Transverse colon (tissue), 4 donors: ENCODE measurements at regions of chr12 and their contacts with region 1.

Region 1: DNA sequence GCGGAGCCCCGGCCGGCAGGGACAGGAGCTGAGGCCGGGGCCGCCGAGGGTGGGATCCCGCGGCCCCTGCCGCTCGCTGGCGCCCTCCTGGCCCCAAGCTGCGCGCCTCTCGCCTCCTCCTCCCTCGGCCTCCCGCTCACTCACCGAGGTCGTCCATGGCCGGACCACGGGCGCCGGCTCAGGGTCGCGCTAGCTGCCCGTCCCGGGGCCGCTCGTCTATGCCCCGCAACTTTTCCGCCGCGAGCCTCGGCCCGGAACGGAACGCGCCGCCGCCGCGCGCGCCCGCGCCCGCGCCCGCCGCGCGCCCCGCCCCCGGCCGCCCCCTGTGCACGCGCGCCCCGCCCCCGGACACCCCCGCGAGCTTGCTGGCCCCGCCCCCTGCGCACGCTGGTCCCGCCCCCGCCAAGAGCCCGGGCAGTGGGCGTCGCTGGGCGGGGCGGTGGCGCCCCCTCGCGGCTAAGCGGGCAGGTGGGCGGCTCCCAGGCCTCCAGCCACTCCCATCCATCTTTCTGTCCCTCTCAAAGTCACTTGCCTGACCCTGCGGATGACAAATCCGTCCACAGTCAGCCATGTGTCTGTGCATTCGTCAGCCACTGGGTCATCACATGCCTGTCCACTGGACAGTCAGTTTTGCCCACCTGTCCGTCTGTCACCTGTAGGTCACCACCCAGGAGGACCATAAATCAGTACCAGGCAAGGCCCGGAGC is at the start of gene PXN:
- DNase-seq: peak; percentile 93
- H3K4me3 ChIP-seq: peak within 1 kb of the TSS; percentile 95 to 99 (median 96)
- H3K27ac ChIP-seq: peak within 1 kb of the TSS; percentile 94 to 98 (median 94)
- H3K4me1 ChIP-seq: peaks cover 18 to 63% (median 42%) of the 10 kb centered on the region in 4 donors
- H3K27me3 ChIP-seq: no peaks in the 10 kb centered on the region
- CTCF ChIP-seq: peak; percentile 63 to 88 (median 77)
- EP300 ChIP-seq: no peak
- POLR2A ChIP-seq: peak; percentile 52
- total RNA-seq, gene PXN: 101 to 328 (median 198) TPM

Region 2: GRCh38 chr12:120228291-120229070 is 37.1 kb before region 1 on chr12:
- in situ Hi-C with region 1: loop called in 2 of 4 experiments (anchors 5 kb)
- intact Hi-C with region 1: loop called (anchors 2 kb)
- DNase-seq: peak; percentile 94
- H3K4me3 ChIP-seq: no peak overlapping the region
- H3K27ac ChIP-seq: peak overlapping the region; percentile 88 to 92 (median 90)
- H3K4me1 ChIP-seq: peaks cover 63 to 98% (median 91%) of the 10 kb centered on the region in 4 donors
- H3K27me3 ChIP-seq: no peaks in the 10 kb centered on the region
- CTCF ChIP-seq: peak; percentile 92 to 98 (median 95)
- EP300 ChIP-seq: no peak
- POLR2A ChIP-seq: no peak

Region 3: GRCh38 chr12:120234643-120235368 is 30.8 kb before region 1 on chr12:
- in situ Hi-C with region 1: loop called in 1 of 4 experiments (anchors 5 kb)
- intact Hi-C with region 1: no loop called
- DNase-seq: peak; percentile 77
- H3K4me3 ChIP-seq: no peak overlapping the region
- H3K27ac ChIP-seq: peak overlapping the region; percentile 88 to 92 (median 90)
- H3K4me1 ChIP-seq: peaks cover 57 to 100% (median 93%) of the 10 kb centered on the region in 4 donors
- H3K27me3 ChIP-seq: no peaks in the 10 kb centered on the region
- CTCF ChIP-seq: peak; percentile 29 to 61 (median 43)
- EP300 ChIP-seq: no peak
- POLR2A ChIP-seq: no peak

Region 4: DNA sequence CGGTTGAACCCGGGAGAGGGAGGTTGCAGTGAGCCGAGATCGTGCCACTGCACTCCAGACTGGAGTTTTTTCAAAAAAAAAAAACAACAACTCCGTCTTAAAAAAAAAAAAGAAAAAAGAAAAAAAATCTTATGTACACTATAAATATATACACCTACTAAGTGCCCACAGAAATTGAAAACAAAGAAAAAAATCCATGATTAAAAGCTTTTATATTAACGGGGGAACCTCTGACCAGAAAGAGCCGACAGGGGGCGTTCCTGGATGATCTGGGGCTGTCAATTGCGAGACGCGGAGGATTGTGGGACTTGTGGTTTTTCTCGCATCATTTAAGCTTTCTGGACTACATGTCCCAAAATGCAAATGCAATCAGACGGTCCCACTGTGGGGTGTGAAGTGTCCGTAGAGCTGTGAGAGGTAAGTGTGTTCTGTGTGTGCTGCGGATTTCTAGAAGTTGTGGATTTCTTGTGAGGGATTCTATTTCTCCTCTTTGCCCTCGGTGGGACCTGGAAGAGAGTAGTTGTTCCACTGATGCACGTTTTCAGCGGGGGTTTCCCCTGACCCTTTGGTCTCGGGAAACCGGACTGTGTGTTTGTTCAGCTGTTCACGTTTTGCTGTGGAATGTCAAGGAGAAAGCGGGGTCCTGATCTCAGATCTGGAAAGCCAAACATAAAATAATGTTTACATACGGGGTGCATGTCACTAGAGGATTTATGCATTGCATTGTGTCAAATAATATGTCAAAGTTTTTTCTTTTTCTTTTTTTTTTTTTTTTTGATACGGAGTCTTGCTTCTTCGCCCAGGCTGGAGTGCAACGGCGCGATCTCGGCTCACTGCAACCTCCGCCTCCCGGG is 36.6 kb after region 1 on chr12 and contains the start of gene SIRT4:
- in situ Hi-C with region 1: no loop called
- intact Hi-C with region 1: no loop called
- DNase-seq: peak; percentile 91
- H3K4me3 ChIP-seq: peak within 1 kb of the TSS; percentile 53 to 74 (median 58)
- H3K27ac ChIP-seq: peak within 1 kb of the TSS; percentile 77 to 88 (median 80)
- H3K4me1 ChIP-seq: peaks cover 4 to 6% (median 5%) of the 10 kb centered on the region in 4 donors
- H3K27me3 ChIP-seq: no peaks in the 10 kb centered on the region
- CTCF ChIP-seq: peak; percentile 69 to 83 (median 72)
- EP300 ChIP-seq: no peak
- POLR2A ChIP-seq: no peak
- total RNA-seq, gene SIRT4: 0.95 to 1.9 TPM in 2 of 4 donors, not detected in the others